ENCODE measurements at regions of chr3 and their contacts with region 1.

Region 1: GRCh38 chr3:146218880-146219866 is 31.7 kb downstream of the PLSCR4 start:
- H3K4me3 Mint-ChIP-seq: no peak overlapping the region
- H3K27ac Mint-ChIP-seq: no peak overlapping the region
- H3K4me1 Mint-ChIP-seq: no peaks in the 10 kb centered on the region
- H3K27me3 Mint-ChIP-seq: no peaks in the 10 kb centered on the region

Region 2: GRCh38 chr3:146326670-146327543 is 107.7 kb after region 1 on chr3:
- intact Hi-C with region 1: loop called (anchors 1 kb)
- H3K4me3 Mint-ChIP-seq: no peak overlapping the region
- H3K27ac Mint-ChIP-seq: no peak overlapping the region
- H3K4me1 Mint-ChIP-seq: no peaks in the 10 kb centered on the region
- H3K27me3 Mint-ChIP-seq: no peaks in the 10 kb centered on the region

Region 3: DNA sequence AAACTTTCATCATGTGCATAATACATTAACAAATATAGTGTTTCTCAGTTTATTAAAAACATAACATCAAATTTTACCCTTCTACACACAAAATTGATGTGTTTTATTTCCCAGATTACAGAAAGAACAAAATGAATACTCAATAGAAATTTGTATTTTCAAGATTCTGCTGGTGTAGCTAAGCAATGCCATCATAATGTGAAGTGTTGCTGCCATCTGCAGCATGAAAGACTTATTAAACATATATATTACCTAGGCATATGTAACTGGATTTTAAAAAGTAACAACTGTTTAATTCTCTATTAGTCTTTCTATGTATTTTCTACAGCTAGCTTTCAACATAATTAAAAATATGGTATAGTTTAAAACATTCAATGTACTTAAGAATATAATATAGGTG is 358.5 kb after region 1 on chr3:
- intact Hi-C with region 1: loop called (anchors 1 kb)
- H3K4me3 Mint-ChIP-seq: no peak overlapping the region
- H3K27ac Mint-ChIP-seq: no peak overlapping the region
- H3K4me1 Mint-ChIP-seq: peaks cover 8% of the 10 kb centered on the region
- H3K27me3 Mint-ChIP-seq: no peaks in the 10 kb centered on the region

Region 4: DNA sequence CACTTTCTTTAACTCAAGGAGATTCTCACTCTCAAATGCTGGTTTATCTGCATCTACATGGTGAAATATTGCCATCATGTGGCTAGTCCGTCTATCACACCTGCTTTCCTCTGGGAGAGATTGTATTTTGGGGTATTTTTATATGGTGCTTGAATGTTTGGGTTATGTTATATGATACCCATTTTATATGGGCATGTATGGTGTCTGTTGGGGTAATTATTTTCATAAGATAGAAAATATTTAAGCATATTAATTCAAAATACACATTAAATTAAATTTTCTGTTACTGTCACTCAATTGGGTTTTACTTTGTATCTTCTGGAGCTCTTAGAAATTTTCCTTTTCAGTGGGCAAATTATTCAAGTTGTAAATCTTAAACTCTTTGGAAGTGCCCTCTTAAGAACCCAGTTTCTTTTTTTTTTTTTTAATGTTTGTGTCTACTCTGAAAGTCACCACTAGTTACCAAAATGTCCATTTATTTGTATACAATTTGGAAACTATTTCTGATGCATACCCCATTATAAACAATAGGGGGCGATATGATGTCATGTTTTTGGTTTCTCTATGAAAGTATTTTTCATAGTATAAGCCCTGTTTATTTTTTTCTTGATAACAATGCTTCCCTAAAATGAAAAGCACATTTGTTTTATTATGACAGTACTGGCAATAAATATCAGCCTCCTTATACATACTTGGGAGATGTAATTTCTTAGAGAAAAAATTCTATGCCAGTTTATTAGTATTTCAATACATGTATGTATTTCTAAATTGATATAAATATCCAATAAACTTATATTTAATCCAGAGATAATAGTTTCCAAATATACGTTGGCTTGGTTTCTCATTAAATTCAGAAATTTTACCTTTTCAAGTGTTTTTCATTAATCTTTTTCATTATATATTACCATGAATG is 422.0 kb after region 1 on chr3:
- intact Hi-C with region 1: loop called (anchors 5 kb)
- H3K4me3 Mint-ChIP-seq: no peak overlapping the region
- H3K27ac Mint-ChIP-seq: no peak overlapping the region
- H3K4me1 Mint-ChIP-seq: no peaks in the 10 kb centered on the region
- H3K27me3 Mint-ChIP-seq: peaks cover 2% of the 10 kb centered on the region

Measured in dendritic cell treated with granulocyte-macrophage colony-stimulating factor and Interleukin-4, amounts not matched to agents 40 ng/mL and 50 ng/mL, for 4 days (primary cell).